HCT116 (cell line): ENCODE measurements at regions of chr10 and their contacts with region 1.

Region 1: GRCh38 chr10:119199231-119199992 is 8.0 kb upstream of the GRK5 start:
- DNase-seq: peak; percentile 77
- ATAC-seq: peak; percentile 92
- H3K4me3 ChIP-seq: no peak overlapping the region
- H3K27ac ChIP-seq: no peak overlapping the region
- H3K4me1 ChIP-seq: peaks cover 0 to 21% of the 10 kb centered on the region in 2 experiments; a peak in 2 of 4 replicates
- H3K27me3 ChIP-seq: no peaks in the 10 kb centered on the region
- CTCF ChIP-seq: peak; percentile 87 to 93 (median 90)
- POLR2A ChIP-seq: no peak
- RAD21 ChIP-seq: peak; percentile 99

Region 2: GRCh38 chr10:118568327-118568848 is 631.0 kb before region 1 on chr10:
- CTCF ChIA-PET with region 1: interaction called, 3 read pairs
- POLR2A ChIA-PET with region 1: no interaction called
- RAD21 ChIA-PET with region 1: interaction called in 1 of 2 experiments, 3 read pairs
- intact Hi-C with region 1: loop called (anchors 2 kb)
- DNase-seq: peak; percentile 63
- ATAC-seq: peak; percentile 74
- H3K4me3 ChIP-seq: peak overlapping the region in 1 of 2 experiments; percentile 20; a peak in 2 of 4 replicates
- H3K27ac ChIP-seq: no peak overlapping the region
- H3K4me1 ChIP-seq: peaks cover 0 to 4% of the 10 kb centered on the region in 2 experiments; a peak in 1 of 4 replicates
- H3K27me3 ChIP-seq: no peaks in the 10 kb centered on the region
- CTCF ChIP-seq: peak; percentile 70 to 93 (median 73)
- POLR2A ChIP-seq: no peak
- RAD21 ChIP-seq: peak; percentile 96

Region 3: GRCh38 chr10:119095640-119096039 is 103.8 kb before region 1 on chr10:
- CTCF ChIA-PET with region 1: no interaction called
- POLR2A ChIA-PET with region 1: no interaction called
- RAD21 ChIA-PET with region 1: no interaction called
- intact Hi-C with region 1: no loop called
- DNase-seq: no peak
- ATAC-seq: no peak
- H3K4me3 ChIP-seq: no peak overlapping the region
- H3K27ac ChIP-seq: no peak overlapping the region
- H3K4me1 ChIP-seq: peaks cover 6 to 17% of the 10 kb centered on the region in 2 experiments; a peak in 3 of 4 replicates
- H3K27me3 ChIP-seq: no peaks in the 10 kb centered on the region
- CTCF ChIP-seq: no peak
- POLR2A ChIP-seq: no peak
- RAD21 ChIP-seq: no peak

Region 4: GRCh38 chr10:119270762-119271366 is 71.5 kb after region 1 on chr10:
- CTCF ChIA-PET with region 1: interaction called, 5 read pairs
- POLR2A ChIA-PET with region 1: no interaction called
- RAD21 ChIA-PET with region 1: interaction called in 1 of 2 experiments, 10 read pairs
- intact Hi-C with region 1: no loop called
- DNase-seq: peak; percentile 41
- ATAC-seq: peak; percentile 81
- H3K4me3 ChIP-seq: peak overlapping the region; percentile 28 to 48
- H3K27ac ChIP-seq: peak overlapping the region; percentile 81
- H3K4me1 ChIP-seq: peaks cover 47 to 72% of the 10 kb centered on the region in 2 experiments
- H3K27me3 ChIP-seq: no peaks in the 10 kb centered on the region
- CTCF ChIP-seq: no peak
- POLR2A ChIP-seq: peak; percentile 58
- RAD21 ChIP-seq: no peak

Region 5: DNA sequence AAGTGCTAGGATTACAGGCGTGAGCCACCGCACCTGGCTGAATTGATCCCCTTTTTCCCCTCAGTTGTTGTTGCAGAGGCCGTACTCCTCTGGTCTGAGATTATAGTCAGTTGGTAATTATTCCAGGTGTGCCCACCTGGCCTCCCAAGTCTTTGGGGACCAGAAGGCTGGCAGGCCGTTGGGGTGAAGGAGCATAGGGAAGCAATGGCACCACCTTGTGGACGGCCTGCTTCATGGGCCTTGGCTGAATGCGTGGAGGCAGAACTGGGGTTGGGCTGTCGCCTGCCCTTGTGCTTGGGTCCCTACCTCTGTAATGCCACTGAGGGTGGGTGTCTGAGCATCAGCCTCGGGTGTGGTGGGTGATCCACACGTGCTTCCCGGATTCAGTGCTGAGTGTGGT is 217.4 kb after region 1 on chr10:
- CTCF ChIA-PET with region 1: interaction called, 56 read pairs
- POLR2A ChIA-PET with region 1: no interaction called
- RAD21 ChIA-PET with region 1: interaction called, 6 to 7 read pairs
- intact Hi-C with region 1: loop called (anchors 1 kb)
- DNase-seq: peak; percentile 58
- ATAC-seq: peak; percentile 96
- H3K4me3 ChIP-seq: no peak overlapping the region
- H3K27ac ChIP-seq: no peak overlapping the region
- H3K4me1 ChIP-seq: peaks cover 0 to 3% of the 10 kb centered on the region in 2 experiments; a peak in 1 of 4 replicates
- H3K27me3 ChIP-seq: no peaks in the 10 kb centered on the region
- CTCF ChIP-seq: peak; percentile 96 to 98 (median 97)
- POLR2A ChIP-seq: no peak
- RAD21 ChIP-seq: peak; percentile 100

Region 6: GRCh38 chr10:119445311-119445934 is 246.0 kb after region 1 on chr10:
- CTCF ChIA-PET with region 1: interaction called, 70 read pairs
- POLR2A ChIA-PET with region 1: no interaction called
- RAD21 ChIA-PET with region 1: interaction called, 25 to 27 read pairs
- intact Hi-C with region 1: loop called (anchors 1 kb)
- DNase-seq: peak; percentile 70
- ATAC-seq: peak; percentile 88
- H3K4me3 ChIP-seq: no peak overlapping the region
- H3K27ac ChIP-seq: no peak overlapping the region
- H3K4me1 ChIP-seq: peaks cover 7 to 12% of the 10 kb centered on the region in 2 experiments
- H3K27me3 ChIP-seq: no peaks in the 10 kb centered on the region
- CTCF ChIP-seq: peak; percentile 94 to 100 (median 99)
- POLR2A ChIP-seq: no peak
- RAD21 ChIP-seq: peak; percentile 96

Region 7: GRCh38 chr10:119542988-119543813 is 343.8 kb after region 1 on chr10:
- CTCF ChIA-PET with region 1: interaction called, 17 read pairs
- POLR2A ChIA-PET with region 1: no interaction called
- RAD21 ChIA-PET with region 1: interaction called, 3 to 5 read pairs
- intact Hi-C with region 1: loop called (anchors 2 kb)
- DNase-seq: no peak
- ATAC-seq: peak; percentile 63
- H3K4me3 ChIP-seq: peak overlapping the region; percentile 79
- H3K27ac ChIP-seq: peak overlapping the region; percentile 87
- H3K4me1 ChIP-seq: peaks cover 25 to 51% of the 10 kb centered on the region in 2 experiments
- H3K27me3 ChIP-seq: peaks cover under 1% of the 10 kb centered on the region; the same call in 1 of the 2 replicates
- CTCF ChIP-seq: peak; percentile 67 to 98 (median 76)
- POLR2A ChIP-seq: no peak
- RAD21 ChIP-seq: peak; percentile 78

Region 8: GRCh38 chr10:119667562-119668328 is 468.3 kb after region 1 on chr10:
- CTCF ChIA-PET with region 1: no interaction called
- POLR2A ChIA-PET with region 1: no interaction called
- RAD21 ChIA-PET with region 1: no interaction called
- intact Hi-C with region 1: loop called (anchors 5 kb)
- DNase-seq: peak; percentile 87
- ATAC-seq: peak; percentile 93
- H3K4me3 ChIP-seq: peak overlapping the region in 1 of 2 experiments; percentile 43; a peak in 2 of 4 replicates
- H3K27ac ChIP-seq: peak overlapping the region; percentile 74
- H3K4me1 ChIP-seq: peaks cover 39 to 61% of the 10 kb centered on the region in 2 experiments
- H3K27me3 ChIP-seq: no peaks in the 10 kb centered on the region
- CTCF ChIP-seq: no peak; a peak in 1 of 6 replicates
- POLR2A ChIP-seq: no peak
- RAD21 ChIP-seq: peak; percentile 48